CD4-positive, alpha-beta memory T cell (primary cell): ENCODE measurements at regions of chr19 and their contacts with region 1.

Region 1: GRCh38 chr19:18521885-18522624 is at the start of gene ELL:
- DNase-seq: peak; percentile 100
- H3K4me3 ChIP-seq: peak within 1 kb of the TSS; percentile 88 to 96
- H3K4me3 Mint-ChIP-seq: peak within 1 kb of the TSS; percentile 93 to 100 (median 98)
- H3K27ac ChIP-seq: peak within 1 kb of the TSS; percentile 96
- H3K27ac Mint-ChIP-seq: peak within 1 kb of the TSS; percentile 94 to 99 (median 98)
- H3K4me1 ChIP-seq: peaks cover 33% of the 10 kb centered on the region
- H3K4me1 Mint-ChIP-seq: peaks cover 6 to 36% (median 22%) of the 10 kb centered on the region in 4 donors
- H3K27me3 ChIP-seq: no peaks in the 10 kb centered on the region
- H3K27me3 Mint-ChIP-seq: no peaks in the 10 kb centered on the region
- total RNA-seq, gene ELL: 34.9 to 35.9 TPM

Region 2: DNA sequence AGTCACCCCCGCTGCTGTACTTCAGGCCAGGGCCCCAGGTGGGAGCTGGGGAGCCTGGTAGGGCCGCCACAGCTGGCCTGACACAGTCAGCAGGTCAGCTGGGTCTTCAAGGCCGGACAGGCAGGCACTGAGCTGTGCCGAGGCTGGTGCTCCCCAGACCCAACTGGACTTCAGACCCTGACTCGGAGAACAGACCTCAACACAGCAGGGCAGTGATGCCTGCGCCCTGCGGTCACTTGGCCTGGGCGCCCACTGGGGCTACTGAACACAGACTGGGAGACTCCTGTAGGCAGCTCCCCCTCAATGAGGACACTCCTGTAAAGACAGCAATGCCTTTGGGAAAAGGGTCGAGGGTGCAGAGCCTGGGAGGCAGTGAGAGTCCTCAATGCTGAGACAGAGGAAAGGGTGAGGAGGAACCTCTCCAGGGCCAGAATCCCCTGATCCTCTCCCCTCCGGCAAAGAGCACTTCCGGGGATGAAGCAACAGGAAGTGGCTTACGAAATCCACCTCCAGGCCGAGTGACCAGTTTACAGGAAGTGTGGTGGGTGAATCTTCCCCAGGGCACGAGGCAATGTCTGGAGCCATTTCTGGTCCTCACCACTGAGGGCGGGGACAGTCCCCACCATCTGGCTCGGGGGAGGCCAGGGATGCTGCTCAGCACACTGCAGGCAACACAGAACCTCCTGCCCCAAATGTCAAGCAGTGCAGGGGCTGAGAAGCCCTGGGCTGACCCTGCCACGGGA is 43.3 kb before region 1 on chr19:
- CTCF ChIA-PET with region 1: interaction called, 46 read pairs
- POLR2A ChIA-PET with region 1: interaction called, 42 read pairs
- intact Hi-C with region 1: loop called (anchors 1 kb)
- DNase-seq: peak in 3 of 5 donors; percentile 25 to 78 (median 33)
- H3K4me3 ChIP-seq: no peak overlapping the region
- H3K4me3 Mint-ChIP-seq: peak overlapping the region; percentile 53 to 80 (median 71)
- H3K27ac ChIP-seq: peak overlapping the region; percentile 63
- H3K27ac Mint-ChIP-seq: peak overlapping the region; percentile 89 to 95 (median 94)
- H3K4me1 ChIP-seq: peaks cover 88% of the 10 kb centered on the region
- H3K4me1 Mint-ChIP-seq: peaks cover 54 to 96% (median 78%) of the 10 kb centered on the region in 4 donors
- H3K27me3 ChIP-seq: no peaks in the 10 kb centered on the region
- H3K27me3 Mint-ChIP-seq: no peaks in the 10 kb centered on the region

Region 3: GRCh38 chr19:18496167-18496979 is 25.7 kb before region 1 on chr19:
- CTCF ChIA-PET with region 1: interaction called, 131 read pairs
- POLR2A ChIA-PET with region 1: interaction called, 61 read pairs
- intact Hi-C with region 1: no loop called
- DNase-seq: peak; percentile 75 to 96 (median 83)
- H3K4me3 ChIP-seq: peak overlapping the region; percentile 36 to 43
- H3K4me3 Mint-ChIP-seq: peak overlapping the region; percentile 77 to 86 (median 81)
- H3K27ac ChIP-seq: peak overlapping the region; percentile 90
- H3K27ac Mint-ChIP-seq: peak overlapping the region; percentile 95 to 98 (median 97)
- H3K4me1 ChIP-seq: peaks cover 96% of the 10 kb centered on the region
- H3K4me1 Mint-ChIP-seq: peaks cover 59 to 96% (median 81%) of the 10 kb centered on the region in 4 donors
- H3K27me3 ChIP-seq: no peaks in the 10 kb centered on the region
- H3K27me3 Mint-ChIP-seq: no peaks in the 10 kb centered on the region

Region 4: GRCh38 chr19:18542936-18543815 is 21.1 kb after region 1 on chr19 and contains the start of gene FKBP8:
- CTCF ChIA-PET with region 1: interaction called, 9 read pairs
- POLR2A ChIA-PET with region 1: interaction called, 48 read pairs
- intact Hi-C with region 1: loop called (anchors 1 kb)
- DNase-seq: peak; percentile 89 to 94 (median 91)
- H3K4me3 ChIP-seq: peak within 1 kb of the TSS; percentile 52 to 59
- H3K4me3 Mint-ChIP-seq: peak within 1 kb of the TSS; percentile 91 to 100 (median 96)
- H3K27ac ChIP-seq: peak within 1 kb of the TSS; percentile 78
- H3K27ac Mint-ChIP-seq: peak within 1 kb of the TSS; percentile 97 to 99 (median 98)
- H3K4me1 ChIP-seq: peaks cover 25% of the 10 kb centered on the region
- H3K4me1 Mint-ChIP-seq: peaks cover 8 to 35% (median 21%) of the 10 kb centered on the region in 4 donors
- H3K27me3 ChIP-seq: no peaks in the 10 kb centered on the region
- H3K27me3 Mint-ChIP-seq: no peaks in the 10 kb centered on the region
- total RNA-seq, gene FKBP8: 231 to 249 TPM

Region 5: DNA sequence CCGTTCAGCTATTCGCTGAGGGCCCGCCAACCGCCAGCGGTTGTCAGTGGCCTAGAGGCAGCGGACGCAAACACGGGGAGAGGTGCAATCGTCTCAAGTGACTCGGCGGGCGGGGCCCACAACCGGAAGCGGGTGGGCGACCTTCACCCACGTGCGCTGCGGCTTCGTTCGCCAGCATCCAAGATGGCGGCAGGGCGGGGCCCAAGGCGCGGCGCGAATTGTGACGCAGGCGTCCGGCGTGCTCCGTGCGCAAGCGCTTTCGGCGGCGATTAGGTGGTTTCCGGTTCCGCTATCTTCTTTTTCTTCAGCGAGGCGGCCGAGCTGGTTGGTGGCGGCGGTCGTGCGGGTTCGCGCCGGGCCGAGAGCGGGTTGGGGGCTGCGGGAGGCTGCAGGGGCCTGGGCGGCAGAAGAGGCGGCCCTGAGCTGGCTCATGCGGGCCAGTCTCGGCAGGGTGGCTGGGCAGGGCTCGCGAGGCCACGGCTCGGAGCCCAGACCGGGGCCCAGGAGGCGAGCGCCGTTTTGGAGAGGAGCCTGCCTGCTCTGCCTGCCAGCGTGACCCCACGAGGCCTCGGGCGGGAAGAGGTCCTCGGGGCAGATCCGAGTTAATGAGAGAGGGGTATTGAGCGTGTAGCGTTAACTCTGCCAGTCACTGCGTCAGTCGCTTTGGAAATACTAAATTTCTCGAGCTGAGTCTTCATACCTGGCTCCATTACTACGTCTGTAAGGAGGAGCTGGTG is 49.7 kb after region 1 on chr19 and contains the start of gene UBA52:
- CTCF ChIA-PET with region 1: interaction called, 28 read pairs
- POLR2A ChIA-PET with region 1: interaction called, 62 read pairs
- intact Hi-C with region 1: loop called (anchors 1 kb)
- DNase-seq: peak; percentile 98 to 99 (median 99)
- H3K4me3 ChIP-seq: peak within 1 kb of the TSS; percentile 69 to 92
- H3K4me3 Mint-ChIP-seq: peak within 1 kb of the TSS; percentile 89 to 97 (median 94)
- H3K27ac ChIP-seq: peak within 1 kb of the TSS; percentile 97
- H3K27ac Mint-ChIP-seq: peak within 1 kb of the TSS; percentile 97 to 99 (median 98)
- H3K4me1 ChIP-seq: peaks cover 26% of the 10 kb centered on the region
- H3K4me1 Mint-ChIP-seq: peaks cover 12 to 36% (median 22%) of the 10 kb centered on the region in 4 donors
- H3K27me3 ChIP-seq: no peaks in the 10 kb centered on the region
- H3K27me3 Mint-ChIP-seq: no peaks in the 10 kb centered on the region
- total RNA-seq, gene UBA52: 1,962 to 1,978 TPM

Region 6: DNA sequence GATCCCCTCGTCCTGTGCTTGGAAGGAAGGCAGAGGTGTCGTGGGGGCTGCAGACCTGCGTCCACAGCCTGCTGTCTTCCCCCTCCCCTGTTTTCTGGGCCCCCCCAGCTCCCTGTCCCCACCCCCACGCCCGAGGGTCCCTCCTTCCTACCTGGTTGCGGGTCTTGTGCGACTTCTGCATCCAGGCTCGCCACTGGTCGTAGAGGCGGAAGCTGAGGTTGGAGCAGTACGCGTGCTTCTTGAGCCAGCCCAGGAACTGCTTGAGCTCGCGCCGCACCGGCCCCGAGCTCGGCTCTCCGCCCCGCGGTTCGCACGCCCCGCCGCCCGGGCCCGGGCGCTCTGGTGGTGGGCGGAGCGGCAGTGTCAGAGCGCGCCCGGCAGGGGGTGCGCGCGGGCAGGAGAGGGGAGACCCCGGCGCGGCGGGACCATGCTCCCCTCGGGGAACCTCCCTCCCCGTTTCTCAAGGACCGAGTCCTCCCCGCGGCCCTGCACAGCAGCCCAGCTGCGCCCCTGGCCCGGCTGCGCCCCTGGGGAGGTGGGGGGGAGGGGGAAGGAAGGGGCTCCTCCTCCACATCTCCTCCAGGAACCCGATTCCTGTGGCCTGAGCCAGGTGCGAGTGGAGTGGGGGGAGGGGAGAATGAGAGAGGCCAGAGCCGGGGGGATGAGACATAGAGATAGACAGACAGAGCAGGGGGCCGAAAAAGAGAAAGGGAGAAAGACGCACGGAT is 72.2 kb after region 1 on chr19:
- CTCF ChIA-PET with region 1: interaction called, 58 read pairs
- POLR2A ChIA-PET with region 1: interaction called, 48 read pairs
- intact Hi-C with region 1: loop called (anchors 1 kb)
- DNase-seq: peak; percentile 69 to 80 (median 75)
- H3K4me3 ChIP-seq: peak overlapping the region; percentile 52 to 57
- H3K4me3 Mint-ChIP-seq: peak overlapping the region; percentile 69 to 85 (median 76)
- H3K27ac ChIP-seq: peak overlapping the region; percentile 50
- H3K27ac Mint-ChIP-seq: peak overlapping the region in 6 of 7 donors; percentile 56 to 91 (median 78)
- H3K4me1 ChIP-seq: peaks cover 32% of the 10 kb centered on the region
- H3K4me1 Mint-ChIP-seq: peaks cover 18 to 36% (median 25%) of the 10 kb centered on the region in 4 donors
- H3K27me3 ChIP-seq: no peaks in the 10 kb centered on the region
- H3K27me3 Mint-ChIP-seq: peaks cover 0 to under 1% of the 10 kb centered on the region in 2 donors

Region 7: DNA sequence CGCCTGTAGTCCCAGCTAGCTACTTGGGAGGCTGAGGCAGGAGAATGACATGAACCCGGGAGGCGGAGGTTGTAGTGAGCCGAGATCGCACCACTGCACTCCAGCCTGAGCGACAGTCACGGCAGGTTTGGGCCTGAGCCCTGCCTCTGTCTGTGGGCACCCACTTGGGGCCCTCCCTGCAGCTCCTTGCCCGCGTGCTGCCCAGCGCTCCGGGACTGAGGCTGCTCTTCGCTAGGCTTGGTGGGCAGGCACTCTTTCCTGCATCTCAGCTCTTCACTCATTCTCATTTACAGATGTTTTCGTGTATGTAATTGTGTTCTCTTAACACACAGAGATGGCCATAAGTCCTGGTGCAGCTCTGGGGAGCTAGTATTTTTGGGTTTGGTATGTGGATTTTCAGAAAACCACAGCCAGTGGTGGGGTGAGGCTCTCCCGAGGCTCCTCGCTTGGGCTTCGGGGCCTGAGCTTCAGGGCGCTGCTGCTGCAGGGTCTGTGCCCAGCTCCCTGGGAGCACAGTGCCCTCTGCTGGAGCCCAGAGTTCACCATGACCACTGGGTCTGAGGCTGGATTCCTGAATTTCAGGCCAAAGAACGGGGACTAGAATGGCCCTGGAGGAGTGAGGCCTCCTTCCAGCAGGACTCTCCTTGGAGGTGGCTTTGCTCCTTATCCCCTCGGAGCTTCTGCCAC is 324.9 kb after region 1 on chr19:
- CTCF ChIA-PET with region 1: interaction called, 20 read pairs
- POLR2A ChIA-PET with region 1: interaction called, 4 read pairs
- intact Hi-C with region 1: loop called (anchors 1 kb)
- DNase-seq: peak; percentile 58 to 64 (median 62)
- H3K4me3 ChIP-seq: no peak overlapping the region
- H3K4me3 Mint-ChIP-seq: peak overlapping the region in 5 of 8 donors; percentile 17 to 70 (median 39)
- H3K27ac ChIP-seq: no peak overlapping the region
- H3K27ac Mint-ChIP-seq: peak overlapping the region; percentile 42 to 89 (median 63)
- H3K4me1 ChIP-seq: peaks cover 66% of the 10 kb centered on the region
- H3K4me1 Mint-ChIP-seq: peaks cover 47 to 80% (median 63%) of the 10 kb centered on the region in 4 donors
- H3K27me3 ChIP-seq: no peaks in the 10 kb centered on the region
- H3K27me3 Mint-ChIP-seq: no peaks in the 10 kb centered on the region